ENCODE measurements at regions of chr17 and their contacts with region 1.

Region 1: GRCh38 chr17:58953182-58953581 is 153.5 kb downstream of the TRIM37 start:
- DNase-seq: no peak
- H3K4me3 ChIP-seq: no peak overlapping the region
- H3K27ac ChIP-seq: no peak overlapping the region
- H3K4me1 ChIP-seq: no peaks in the 10 kb centered on the region
- H3K27me3 ChIP-seq: no peaks in the 10 kb centered on the region
- CTCF ChIP-seq: no peak
- POLR2A ChIP-seq: no peak

Region 2: DNA sequence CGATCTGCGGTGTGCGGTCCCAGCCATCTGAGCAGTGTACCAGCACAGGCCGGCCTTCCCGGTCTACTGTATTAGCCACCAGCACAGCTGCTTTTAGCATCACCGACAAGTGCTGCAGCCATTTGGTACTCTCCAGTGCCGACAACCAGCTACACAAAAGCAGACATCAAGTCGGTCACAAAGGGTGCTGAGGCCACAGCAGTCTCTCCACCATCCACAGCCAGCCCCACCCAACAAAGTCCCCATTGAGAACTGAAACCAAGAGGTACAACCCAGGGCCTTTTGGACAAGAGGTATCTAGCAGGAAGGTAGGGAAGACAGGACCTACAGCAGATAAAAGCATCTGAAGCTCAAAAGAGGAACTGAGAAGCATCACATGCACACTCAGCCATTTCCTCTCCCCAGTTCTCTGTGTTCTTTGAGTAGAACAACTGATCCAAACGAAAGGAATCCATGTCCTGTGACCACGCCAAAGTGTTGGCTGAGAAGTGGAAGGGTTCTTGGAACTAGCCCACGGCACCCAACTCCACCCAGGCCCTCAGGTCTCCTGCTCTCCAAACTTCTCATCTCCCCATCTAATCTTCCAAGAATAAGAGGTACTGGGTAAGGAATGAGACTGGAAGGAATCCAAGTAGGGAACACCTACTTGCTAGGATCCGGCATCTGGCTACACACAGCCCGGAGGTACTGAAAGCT is 448.2 kb before region 1 on chr17:
- intact Hi-C with region 1: loop called (anchors 5 kb)
- DNase-seq: no peak
- H3K4me3 ChIP-seq: no peak overlapping the region
- H3K27ac ChIP-seq: no peak overlapping the region
- H3K4me1 ChIP-seq: no peaks in the 10 kb centered on the region
- H3K27me3 ChIP-seq: no peaks in the 10 kb centered on the region
- CTCF ChIP-seq: no peak
- POLR2A ChIP-seq: no peak